Dorsolateral prefrontal cortex (tissue), 120 donors: ENCODE measurements at regions of chr17 and their contacts with region 1.

Region 1: GRCh38 chr17:59892924-59893676 is at the starts of genes RPS6KB1 and TUBD1:
- DNase-seq: peak; percentile 88 to 96 (median 93)
- H3K4me3 ChIP-seq: peak within 1 kb of the TSS; percentile 61 to 100 (median 99)
- H3K27ac ChIP-seq: peak within 1 kb of the TSS in 57 of 59 donors; percentile 11 to 97 (median 88)
- H3K27me3 ChIP-seq: no peaks in the 10 kb centered on the region
- CTCF ChIP-seq: peak in 14 of 56 donors; percentile 4 to 57 (median 18)
- total RNA-seq, gene RPS6KB1: 37.9 to 72.2 (median 53.0) TPM
- total RNA-seq, gene TUBD1: 7.0 to 22.2 (median 12.5) TPM

Region 2: DNA sequence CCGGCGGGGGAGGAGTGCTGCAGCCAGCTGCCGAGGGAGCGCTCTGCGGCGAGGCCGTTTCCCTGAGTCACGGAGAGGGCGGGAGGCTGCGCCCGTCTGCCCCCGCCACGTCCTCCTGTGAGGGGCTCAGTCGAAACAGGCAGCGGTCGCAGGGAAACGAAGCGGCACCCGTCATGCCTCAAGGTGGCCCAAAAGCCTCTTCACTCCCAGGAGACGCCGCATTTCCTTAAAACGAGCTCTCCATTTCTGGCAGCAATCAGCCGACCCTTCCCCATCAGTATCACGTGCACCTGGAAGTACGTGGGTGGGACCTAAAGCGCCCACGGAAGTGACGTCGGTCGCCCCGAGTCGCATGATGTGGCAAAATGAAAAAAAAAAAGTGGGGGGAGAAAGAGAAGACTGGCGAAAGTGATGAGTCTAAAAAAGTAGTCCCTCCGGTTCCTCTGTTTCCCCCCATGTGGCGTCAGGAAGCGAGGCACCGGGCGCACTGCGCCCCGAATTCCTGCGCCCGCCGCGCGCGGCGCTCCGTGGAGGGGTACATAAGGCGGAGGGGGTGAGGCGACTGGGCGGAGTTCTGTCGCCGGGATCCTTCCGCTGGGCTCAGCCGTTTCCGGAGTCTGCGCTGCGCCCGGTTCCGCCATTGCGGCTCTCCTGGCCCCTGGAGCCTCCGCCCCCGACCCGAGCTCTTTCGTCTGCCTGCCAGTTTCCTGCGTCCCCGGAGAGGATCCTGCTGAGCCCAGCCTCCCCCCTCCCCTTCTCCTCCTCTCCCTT is 273.6 kb before region 1 on chr17 and contains the start of gene CLTC:
- intact Hi-C with region 1: loop called in 1 of 2 experiments (anchors 5 kb)
- DNase-seq: peak; percentile 80 to 98 (median 92)
- H3K4me3 ChIP-seq: peak within 1 kb of the TSS; percentile 57 to 98 (median 89)
- H3K27ac ChIP-seq: peak within 1 kb of the TSS; percentile 96 to 100 (median 99)
- H3K27me3 ChIP-seq: no peaks in the 10 kb centered on the region
- CTCF ChIP-seq: peak in 27 of 56 donors; percentile 1 to 51 (median 13)
- total RNA-seq, gene CLTC: 248 to 525 (median 428) TPM

Region 3: GRCh38 chr17:59964482-59965328 is 71.6 kb after region 1 on chr17 and contains the start of gene RNFT1:
- intact Hi-C with region 1: loop called in 1 of 2 experiments (anchors 10 kb)
- DNase-seq: peak; percentile 77 to 92 (median 86)
- H3K4me3 ChIP-seq: peak within 1 kb of the TSS; percentile 52 to 98 (median 89)
- H3K27ac ChIP-seq: peak within 1 kb of the TSS; percentile 70 to 98 (median 95)
- H3K27me3 ChIP-seq: no peaks in the 10 kb centered on the region
- CTCF ChIP-seq: peak in 18 of 56 donors; percentile 5 to 50 (median 17)
- total RNA-seq, gene RNFT1: 7.1 to 22.1 (median 13.3) TPM